ENCODE measurements at regions of chr7 and their contacts with region 1.

Region 1: GRCh38 chr7:140384894-140385545 is 13.3 kb downstream of the SLC37A3 start:
- DNase-seq: no peak
- H3K4me3 ChIP-seq: no peak overlapping the region
- H3K27ac ChIP-seq: no peak overlapping the region
- H3K4me1 ChIP-seq: peaks cover 1 to 4% (median 2%) of the 10 kb centered on the region in 4 experiments; a peak in 5 of 7 replicates
- H3K27me3 ChIP-seq: no peaks in the 10 kb centered on the region
- CTCF ChIP-seq: no peak
- EP300 ChIP-seq: no peak
- POLR2A ChIP-seq: no peak
- RAD21 ChIP-seq: no peak

Region 2: GRCh38 chr7:140349144-140349771 is 35.8 kb before region 1 on chr7:
- CTCF ChIA-PET with region 1: no interaction called
- POLR2A ChIA-PET with region 1: no interaction called
- DNase-seq: no peak
- H3K4me3 ChIP-seq: no peak overlapping the region
- H3K27ac ChIP-seq: no peak overlapping the region
- H3K4me1 ChIP-seq: no peaks in the 10 kb centered on the region
- H3K27me3 ChIP-seq: no peaks in the 10 kb centered on the region
- CTCF ChIP-seq: no peak
- EP300 ChIP-seq: no peak
- POLR2A ChIP-seq: no peak
- RAD21 ChIP-seq: no peak

Region 3: DNA sequence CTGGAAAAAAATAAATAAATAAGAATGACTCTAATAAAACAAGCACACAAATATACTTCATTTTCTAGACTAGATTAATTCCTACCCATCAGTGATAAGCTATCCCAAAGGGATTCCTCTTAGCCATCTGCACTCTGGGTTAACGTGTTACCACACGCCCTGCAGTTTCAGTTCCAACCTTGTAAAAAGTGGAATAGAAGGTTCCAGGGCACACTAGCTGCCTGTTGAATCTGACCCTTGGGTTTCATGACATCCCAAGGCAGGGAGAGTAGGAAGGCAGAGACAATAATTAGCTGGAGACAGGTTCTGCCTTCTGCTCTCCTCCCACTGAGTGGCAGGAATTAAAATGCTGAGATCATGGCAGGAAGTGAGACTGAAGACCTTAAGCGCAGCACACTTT is 20.2 kb before region 1 on chr7:
- CTCF ChIA-PET with region 1: interaction called, 19 read pairs
- POLR2A ChIA-PET with region 1: no interaction called
- DNase-seq: no peak
- H3K4me3 ChIP-seq: no peak overlapping the region
- H3K27ac ChIP-seq: no peak overlapping the region
- H3K4me1 ChIP-seq: peaks cover 0 to 4% (median under 1%) of the 10 kb centered on the region in 4 experiments; a peak in 3 of 7 replicates
- H3K27me3 ChIP-seq: no peaks in the 10 kb centered on the region
- CTCF ChIP-seq: no peak
- EP300 ChIP-seq: no peak
- POLR2A ChIP-seq: no peak
- RAD21 ChIP-seq: no peak

Measured in H1 (cell line).